CD4-positive, alpha-beta memory T cell (primary cell): ENCODE measurements at regions of chr16 and their contacts with region 1.

Region 1: GRCh38 chr16:28277537-28278388 is 14.6 kb upstream of the SBK1 start:
- DNase-seq: peak; percentile 79 to 86 (median 80)
- H3K4me3 ChIP-seq: peak overlapping the region; percentile 69 to 76
- H3K4me3 Mint-ChIP-seq: peak overlapping the region; percentile 76 to 88 (median 84)
- H3K27ac ChIP-seq: peak overlapping the region; percentile 60
- H3K27ac Mint-ChIP-seq: peak overlapping the region; percentile 79 to 98 (median 94)
- H3K4me1 ChIP-seq: peaks cover 37% of the 10 kb centered on the region
- H3K4me1 Mint-ChIP-seq: peaks cover 24 to 49% (median 37%) of the 10 kb centered on the region in 4 donors
- H3K27me3 ChIP-seq: no peaks in the 10 kb centered on the region
- H3K27me3 Mint-ChIP-seq: peaks cover 0 to 8% of the 10 kb centered on the region in 2 donors

Region 2: GRCh38 chr16:28291873-28292660 is 14.3 kb after region 1 on chr16 and contains the start of gene SBK1:
- CTCF ChIA-PET with region 1: interaction called, 35 read pairs
- POLR2A ChIA-PET with region 1: interaction called, 33 read pairs
- intact Hi-C with region 1: no loop called
- DNase-seq: peak; percentile 79 to 90 (median 88)
- H3K4me3 ChIP-seq: peak within 1 kb of the TSS; percentile 72 to 88
- H3K4me3 Mint-ChIP-seq: peak within 1 kb of the TSS; percentile 93 to 97 (median 95)
- H3K27ac ChIP-seq: peak within 1 kb of the TSS; percentile 75
- H3K27ac Mint-ChIP-seq: peak within 1 kb of the TSS; percentile 85 to 96 (median 94)
- H3K4me1 ChIP-seq: peaks cover 61% of the 10 kb centered on the region
- H3K4me1 Mint-ChIP-seq: peaks cover 38 to 69% (median 53%) of the 10 kb centered on the region in 4 donors
- H3K27me3 ChIP-seq: no peaks in the 10 kb centered on the region
- H3K27me3 Mint-ChIP-seq: no peaks in the 10 kb centered on the region
- total RNA-seq, gene SBK1: 14.2 to 14.6 TPM

Region 3: DNA sequence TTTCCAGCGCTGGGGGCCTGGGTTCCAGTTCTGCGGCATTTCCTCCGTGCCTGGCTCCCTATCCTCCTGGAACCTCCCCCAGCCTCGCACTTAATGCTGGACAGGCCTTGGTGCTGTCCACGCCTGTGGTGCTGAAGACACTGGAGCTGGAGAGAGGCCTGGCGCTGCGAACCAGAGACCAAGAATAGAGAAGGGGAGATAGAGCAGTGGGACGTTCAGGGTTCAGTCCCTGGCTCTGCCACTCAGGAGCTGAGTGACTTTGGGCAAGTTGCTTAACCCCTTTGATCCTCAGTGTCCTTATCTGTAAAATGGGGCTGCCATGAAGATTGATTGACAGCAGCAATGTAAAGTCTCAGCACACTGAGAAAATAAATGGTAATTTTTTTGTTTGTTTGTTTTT is 26.5 kb after region 1 on chr16:
- CTCF ChIA-PET with region 1: interaction called, 321 read pairs
- POLR2A ChIA-PET with region 1: interaction called, 68 read pairs
- intact Hi-C with region 1: no loop called
- DNase-seq: no peak
- H3K4me3 ChIP-seq: no peak overlapping the region
- H3K4me3 Mint-ChIP-seq: no peak overlapping the region
- H3K27ac ChIP-seq: no peak overlapping the region
- H3K27ac Mint-ChIP-seq: peak overlapping the region in 2 of 7 donors; percentile 14 to 46
- H3K4me1 ChIP-seq: peaks cover 44% of the 10 kb centered on the region
- H3K4me1 Mint-ChIP-seq: peaks cover 40 to 58% (median 48%) of the 10 kb centered on the region in 4 donors
- H3K27me3 ChIP-seq: no peaks in the 10 kb centered on the region
- H3K27me3 Mint-ChIP-seq: no peaks in the 10 kb centered on the region

Region 4: GRCh38 chr16:28317040-28317880 is 39.5 kb after region 1 on chr16:
- CTCF ChIA-PET with region 1: interaction called, 321 read pairs
- POLR2A ChIA-PET with region 1: interaction called, 68 read pairs
- intact Hi-C with region 1: loop called (anchors 1 kb)
- DNase-seq: peak; percentile 58 to 72 (median 64)
- H3K4me3 ChIP-seq: no peak overlapping the region
- H3K4me3 Mint-ChIP-seq: peak overlapping the region in 5 of 8 donors; percentile 4 to 54 (median 48)
- H3K27ac ChIP-seq: no peak overlapping the region
- H3K27ac Mint-ChIP-seq: peak overlapping the region in 6 of 7 donors; percentile 41 to 88 (median 68)
- H3K4me1 ChIP-seq: peaks cover 30% of the 10 kb centered on the region
- H3K4me1 Mint-ChIP-seq: peaks cover 15 to 39% (median 18%) of the 10 kb centered on the region in 4 donors
- H3K27me3 ChIP-seq: no peaks in the 10 kb centered on the region
- H3K27me3 Mint-ChIP-seq: no peaks in the 10 kb centered on the region